Colonic mucosa (tissue), 4 donors: ENCODE measurements at regions of chr20 and their contacts with region 1.

Region 1: GRCh38 chr20:19995220-19995863 is 21.8 kb upstream of the NAA20 start:
- DNase-seq: no peak
- H3K4me3 ChIP-seq: no peak overlapping the region
- H3K27ac ChIP-seq: no peak overlapping the region
- H3K4me1 ChIP-seq: peaks cover 4% of the 10 kb centered on the region
- H3K27me3 ChIP-seq: no peaks in the 10 kb centered on the region
- CTCF ChIP-seq: peak; percentile 56

Region 2: DNA sequence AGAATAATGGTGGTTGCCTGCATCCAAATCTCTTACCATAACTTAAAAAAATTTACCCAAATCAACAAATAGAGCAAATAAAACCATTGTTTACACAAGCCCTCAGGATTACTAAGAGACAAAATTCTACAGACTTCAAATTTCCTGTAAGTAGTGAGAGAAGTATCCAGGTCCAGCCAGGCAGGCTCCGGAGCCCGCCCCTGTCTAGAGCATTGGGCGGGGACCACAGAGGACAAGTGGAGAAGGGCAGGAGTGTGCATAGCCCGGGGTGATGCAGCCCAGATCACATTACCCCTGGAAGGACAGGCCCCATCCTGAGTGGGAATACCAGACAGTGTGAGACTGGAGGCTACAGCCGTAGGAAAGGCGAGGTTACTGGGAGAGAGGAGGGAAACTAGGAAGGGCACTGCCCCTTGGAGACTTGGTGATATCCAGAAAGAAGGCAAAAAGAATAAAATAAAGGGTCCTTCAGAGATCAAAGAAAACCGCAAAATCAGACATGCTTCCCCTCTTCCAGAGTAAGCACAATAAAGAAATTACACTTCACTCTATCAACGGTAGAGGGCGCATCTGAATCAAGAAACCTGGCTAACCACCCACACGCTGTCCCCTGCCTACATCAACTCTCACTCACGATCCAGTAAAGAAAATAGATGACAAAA is 210.7 kb before region 1 on chr20:
- intact Hi-C with region 1: loop called (anchors 2 kb)
- DNase-seq: peak; percentile 73
- H3K4me3 ChIP-seq: no peak overlapping the region
- H3K27ac ChIP-seq: peak overlapping the region; percentile 44
- H3K4me1 ChIP-seq: no peaks in the 10 kb centered on the region
- H3K27me3 ChIP-seq: no peaks in the 10 kb centered on the region
- CTCF ChIP-seq: peak; percentile 59

Region 3: GRCh38 chr20:19897891-19898290 is 97.5 kb before region 1 on chr20:
- intact Hi-C with region 1: loop called (anchors 5 kb)
- DNase-seq: no peak
- H3K4me3 ChIP-seq: no peak overlapping the region
- H3K27ac ChIP-seq: no peak overlapping the region
- H3K4me1 ChIP-seq: no peaks in the 10 kb centered on the region
- H3K27me3 ChIP-seq: no peaks in the 10 kb centered on the region
- CTCF ChIP-seq: no peak

Region 4: GRCh38 chr20:20649945-20650344 is 654.6 kb after region 1 on chr20:
- intact Hi-C with region 1: no loop called
- DNase-seq: no peak
- H3K4me3 ChIP-seq: no peak overlapping the region
- H3K27ac ChIP-seq: no peak overlapping the region
- H3K4me1 ChIP-seq: no peaks in the 10 kb centered on the region
- H3K27me3 ChIP-seq: no peaks in the 10 kb centered on the region
- CTCF ChIP-seq: no peak